Activated CD4-positive, alpha-beta memory T cell treated with anti-CD3 and anti-CD28 coated beads for 36 hours (primary cell): ENCODE measurements at regions of chr4 and their contacts with region 1.

Region 1: DNA sequence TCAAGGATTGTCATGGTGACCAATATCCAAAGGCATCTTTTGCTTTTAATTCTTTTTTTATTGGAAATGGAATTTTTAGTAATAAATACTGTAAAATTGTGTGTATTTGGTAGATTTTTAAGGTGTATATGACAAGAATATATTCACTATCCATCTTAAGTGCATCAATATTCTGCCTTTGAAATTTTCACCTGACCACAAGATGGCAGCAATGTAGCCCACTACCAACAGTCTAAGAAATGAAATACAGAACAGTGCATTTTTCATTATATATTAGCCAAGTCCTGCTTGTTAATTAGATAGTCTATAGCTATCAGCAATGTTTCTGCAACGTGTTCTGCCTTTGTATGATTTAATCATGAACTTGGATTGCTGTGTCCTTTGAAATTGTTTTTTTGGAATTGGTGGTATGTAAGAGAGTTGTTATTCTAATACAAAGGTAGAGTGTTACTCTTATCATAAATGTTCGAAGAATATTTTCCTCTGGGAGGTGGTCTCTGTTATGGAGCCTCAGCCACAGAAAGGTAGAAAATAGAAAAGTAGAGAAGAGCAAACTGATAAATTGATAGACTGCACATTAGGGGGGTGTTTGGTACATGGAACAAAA is 38.2 kb downstream of the HPGDS start:
- DNase-seq: peak; percentile 12
- H3K4me3 Mint-ChIP-seq: no peak overlapping the region
- H3K27ac Mint-ChIP-seq: no peak overlapping the region
- H3K4me1 Mint-ChIP-seq: no peaks in the 10 kb centered on the region
- H3K27me3 Mint-ChIP-seq: no peaks in the 10 kb centered on the region

Region 2: DNA sequence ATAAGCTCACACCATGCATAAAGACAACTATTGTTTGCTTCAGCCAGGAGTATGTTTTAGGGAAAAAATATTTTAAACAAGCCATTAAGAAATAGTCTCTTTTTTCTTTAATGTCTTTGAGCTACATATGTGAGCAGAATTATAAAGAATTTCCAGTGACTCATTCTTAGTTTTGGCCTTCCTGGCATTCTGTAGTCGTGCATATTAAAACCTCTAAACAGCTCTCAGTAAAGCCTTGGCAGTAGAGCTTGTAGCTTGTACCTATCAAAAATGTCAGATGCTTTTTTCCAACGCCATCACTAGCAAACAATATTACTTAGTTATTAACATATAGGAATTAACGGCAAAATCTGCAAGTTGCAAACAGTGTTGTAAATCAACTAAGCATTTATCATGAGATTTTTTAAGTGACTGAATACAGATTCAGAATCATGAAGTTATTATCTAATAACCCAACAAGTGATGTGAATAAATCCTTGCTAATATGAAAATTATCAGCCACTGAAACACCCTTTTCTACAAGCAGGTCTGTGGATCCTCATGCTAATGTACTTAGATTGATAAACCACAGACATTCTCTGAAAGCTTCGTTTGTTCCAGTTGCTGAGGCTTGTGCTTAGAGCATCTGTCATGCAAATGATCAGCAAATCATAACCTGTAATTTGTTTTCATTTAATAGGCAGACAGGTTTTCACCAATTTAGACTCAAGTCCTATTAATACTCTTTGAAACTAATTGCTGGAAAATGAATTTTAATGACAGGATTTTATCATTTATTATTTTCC is 887.9 kb before region 1 on chr4:
- CTCF ChIA-PET with region 1: no interaction called
- POLR2A ChIA-PET with region 1: no interaction called
- intact Hi-C with region 1: no loop called
- DNase-seq: no peak
- H3K4me3 Mint-ChIP-seq: no peak overlapping the region
- H3K27ac Mint-ChIP-seq: no peak overlapping the region
- H3K4me1 Mint-ChIP-seq: no peaks in the 10 kb centered on the region
- H3K27me3 Mint-ChIP-seq: no peaks in the 10 kb centered on the region

Region 3: DNA sequence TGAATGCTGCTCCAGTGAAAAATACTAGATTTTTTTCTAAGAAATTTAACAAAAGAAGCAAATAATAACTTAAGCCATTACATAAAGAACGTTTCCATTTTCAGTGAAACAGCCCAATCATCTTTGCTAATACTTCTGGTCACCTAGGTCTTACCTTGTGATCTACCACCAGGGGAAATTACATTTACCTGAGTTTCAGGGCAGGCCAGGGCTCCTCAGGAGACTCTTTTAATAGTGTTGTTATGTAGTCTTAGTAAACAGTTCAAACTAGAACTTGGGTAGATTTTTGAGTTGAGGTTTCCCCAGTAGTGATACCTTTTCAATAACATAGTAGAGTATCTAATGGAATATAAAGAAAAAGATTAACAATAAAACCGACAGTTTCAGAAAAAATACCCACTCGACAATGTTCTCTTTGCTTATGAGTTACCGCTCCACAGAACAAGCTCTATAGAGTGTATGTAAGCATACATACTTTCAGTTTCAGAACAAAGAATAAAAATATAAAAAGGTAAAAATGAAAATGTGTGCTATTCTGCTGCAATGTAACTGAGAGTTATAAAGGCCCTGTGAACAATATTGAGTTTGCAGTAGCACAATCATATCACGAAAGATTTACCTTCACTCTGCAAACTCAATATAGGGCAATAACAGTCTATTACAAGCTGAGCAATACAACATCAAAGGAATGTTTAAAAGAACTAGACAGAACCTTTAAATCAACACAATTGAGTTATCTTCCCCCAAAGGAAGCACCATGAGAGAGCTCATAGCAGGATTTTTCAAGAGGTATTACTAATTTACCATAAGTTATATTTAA is 310.1 kb before region 1 on chr4:
- CTCF ChIA-PET with region 1: no interaction called
- POLR2A ChIA-PET with region 1: no interaction called
- intact Hi-C with region 1: no loop called
- DNase-seq: no peak
- H3K4me3 Mint-ChIP-seq: no peak overlapping the region
- H3K27ac Mint-ChIP-seq: no peak overlapping the region
- H3K4me1 Mint-ChIP-seq: no peaks in the 10 kb centered on the region
- H3K27me3 Mint-ChIP-seq: no peaks in the 10 kb centered on the region

Region 4: DNA sequence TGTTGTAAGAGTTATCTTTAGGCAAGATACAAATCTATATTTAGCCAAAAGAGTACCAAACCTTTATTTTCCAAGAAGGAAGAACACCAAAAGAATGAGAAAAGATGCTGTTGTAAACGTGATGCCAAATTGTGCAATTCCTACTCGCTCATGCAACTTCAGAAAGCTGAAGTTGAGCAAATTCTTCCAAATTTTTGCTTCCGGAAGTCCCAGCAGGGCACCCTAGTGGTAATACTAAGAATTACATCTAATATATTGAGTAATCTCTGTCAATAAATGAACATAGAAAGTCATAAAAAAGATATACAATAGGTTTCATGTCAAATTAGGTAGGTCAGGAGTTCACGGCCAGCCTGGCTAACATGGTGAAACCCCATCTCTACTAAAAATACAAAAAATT is 132.9 kb before region 1 on chr4:
- CTCF ChIA-PET with region 1: no interaction called
- POLR2A ChIA-PET with region 1: no interaction called
- intact Hi-C with region 1: no loop called
- DNase-seq: no peak
- H3K4me3 Mint-ChIP-seq: no peak overlapping the region
- H3K27ac Mint-ChIP-seq: no peak overlapping the region
- H3K4me1 Mint-ChIP-seq: no peaks in the 10 kb centered on the region
- H3K27me3 Mint-ChIP-seq: peaks cover 8% of the 10 kb centered on the region

Region 5: DNA sequence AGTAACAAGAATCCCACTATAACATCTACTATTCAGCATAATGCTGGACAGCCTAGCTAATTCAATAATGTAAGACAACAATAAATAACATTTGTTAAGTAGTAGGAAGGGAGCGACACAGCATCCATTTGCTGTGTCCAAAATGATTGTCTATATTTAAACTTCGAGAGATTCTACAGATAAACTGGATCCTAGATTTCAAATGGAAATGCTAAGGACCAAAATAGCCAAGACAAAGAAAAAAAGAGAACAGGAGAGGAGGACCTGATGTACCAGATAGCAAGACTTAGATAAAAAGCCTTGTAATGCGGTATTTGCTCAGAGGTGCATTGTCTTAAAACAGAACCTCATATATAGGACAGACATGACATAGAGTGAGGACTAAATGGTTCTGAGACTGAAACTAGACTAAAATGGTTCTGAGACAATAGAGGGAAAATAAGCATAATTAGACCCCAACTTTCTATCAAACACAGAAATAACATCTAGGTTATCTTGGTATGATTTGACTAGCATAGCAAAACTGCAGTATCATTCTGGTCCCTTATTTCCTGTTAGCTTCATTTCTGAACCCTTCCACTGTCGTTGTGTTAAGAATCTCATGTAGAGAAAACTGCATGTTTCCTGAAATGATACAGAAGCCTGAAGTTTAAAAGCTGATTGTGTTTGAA is 34.3 kb after region 1 on chr4:
- CTCF ChIA-PET with region 1: interaction called, 4 read pairs
- POLR2A ChIA-PET with region 1: no interaction called
- intact Hi-C with region 1: loop called (anchors 5 kb)
- DNase-seq: no peak
- H3K4me3 Mint-ChIP-seq: peak overlapping the region; percentile 48
- H3K27ac Mint-ChIP-seq: peak overlapping the region; percentile 78
- H3K4me1 Mint-ChIP-seq: peaks cover 19% of the 10 kb centered on the region
- H3K27me3 Mint-ChIP-seq: no peaks in the 10 kb centered on the region

Region 6: GRCh38 chr4:94352996-94353395 is 48.5 kb after region 1 on chr4:
- CTCF ChIA-PET with region 1: no interaction called
- POLR2A ChIA-PET with region 1: no interaction called
- intact Hi-C with region 1: no loop called
- DNase-seq: no peak
- H3K4me3 Mint-ChIP-seq: no peak overlapping the region
- H3K27ac Mint-ChIP-seq: no peak overlapping the region
- H3K4me1 Mint-ChIP-seq: peaks cover 17% of the 10 kb centered on the region
- H3K27me3 Mint-ChIP-seq: peaks cover 2% of the 10 kb centered on the region

Region 7: GRCh38 chr4:94390804-94391410 is 86.4 kb after region 1 on chr4:
- CTCF ChIA-PET with region 1: interaction called, 17 read pairs
- POLR2A ChIA-PET with region 1: no interaction called
- intact Hi-C with region 1: loop called (anchors 1 kb)
- DNase-seq: peak; percentile 12
- H3K4me3 Mint-ChIP-seq: no peak overlapping the region
- H3K27ac Mint-ChIP-seq: no peak overlapping the region
- H3K4me1 Mint-ChIP-seq: no peaks in the 10 kb centered on the region
- H3K27me3 Mint-ChIP-seq: peaks cover 6% of the 10 kb centered on the region

Region 8: DNA sequence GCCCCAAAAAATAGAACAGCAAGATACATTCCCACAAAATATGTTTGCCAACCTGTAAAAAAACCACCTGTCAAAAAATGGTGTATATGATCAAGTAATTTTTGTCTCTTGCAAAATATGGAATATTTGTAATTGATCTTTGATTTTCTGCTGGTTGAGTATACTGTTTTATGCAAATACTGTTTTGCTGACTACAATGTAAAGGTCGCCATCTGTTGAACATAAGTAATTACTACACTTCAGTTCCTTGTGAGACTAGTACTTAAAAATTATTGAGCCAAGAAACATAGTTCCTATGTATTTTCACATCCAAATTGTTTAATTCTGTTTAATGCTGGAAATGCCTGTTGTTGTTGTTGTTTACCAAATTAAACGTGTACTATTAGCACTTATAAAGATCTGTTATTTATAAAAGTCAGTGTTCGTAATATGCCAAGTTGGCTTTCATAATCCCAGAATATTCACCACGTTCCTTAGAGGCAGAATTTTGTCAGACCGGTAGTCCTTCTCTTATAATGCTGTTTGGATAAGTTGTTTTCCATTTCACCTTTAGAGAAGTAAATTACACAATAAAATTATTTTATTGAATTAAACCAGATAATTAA is 291.5 kb after region 1 on chr4:
- CTCF ChIA-PET with region 1: no interaction called
- POLR2A ChIA-PET with region 1: no interaction called
- intact Hi-C with region 1: loop called (anchors 1 kb)
- DNase-seq: no peak
- H3K4me3 Mint-ChIP-seq: no peak overlapping the region
- H3K27ac Mint-ChIP-seq: no peak overlapping the region
- H3K4me1 Mint-ChIP-seq: no peaks in the 10 kb centered on the region
- H3K27me3 Mint-ChIP-seq: no peaks in the 10 kb centered on the region